RWPE1 (cell line): ENCODE measurements at regions of chr5 and their contacts with region 1.

Region 1: GRCh38 chr5:174384509-174384947 is 339.0 kb downstream of the NSG2 start:
- DNase-seq: no peak
- H3K27ac ChIP-seq: no peak overlapping the region
- CTCF ChIP-seq: no peak

Region 2: DNA sequence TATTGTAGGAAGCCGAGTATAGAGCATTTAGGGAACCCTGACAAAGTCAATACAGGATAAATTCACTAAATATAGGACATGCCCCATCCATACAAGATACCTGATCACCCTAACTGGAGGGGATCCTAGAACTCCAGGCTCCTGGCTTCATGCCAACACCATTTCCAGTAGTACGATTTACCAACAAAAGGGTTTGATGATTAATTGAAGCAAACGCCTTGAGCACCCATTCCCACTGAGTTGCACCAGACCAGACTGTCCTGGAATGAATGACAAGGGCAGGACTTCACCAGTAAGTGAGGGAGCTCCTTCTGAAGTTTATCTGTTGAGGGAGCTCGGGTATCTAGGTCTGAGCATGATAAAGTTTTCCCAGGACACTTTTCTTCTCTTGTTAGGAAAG is 12.7 kb after region 1 on chr5:
- CTCF ChIA-PET with region 1: no interaction called
- POLR2A ChIA-PET with region 1: interaction called, 11 read pairs
- DNase-seq: no peak
- H3K27ac ChIP-seq: no peak overlapping the region
- CTCF ChIP-seq: no peak